Panc1 (cell line): ENCODE measurements at regions of chr15 and their contacts with region 1.

Region 1: DNA sequence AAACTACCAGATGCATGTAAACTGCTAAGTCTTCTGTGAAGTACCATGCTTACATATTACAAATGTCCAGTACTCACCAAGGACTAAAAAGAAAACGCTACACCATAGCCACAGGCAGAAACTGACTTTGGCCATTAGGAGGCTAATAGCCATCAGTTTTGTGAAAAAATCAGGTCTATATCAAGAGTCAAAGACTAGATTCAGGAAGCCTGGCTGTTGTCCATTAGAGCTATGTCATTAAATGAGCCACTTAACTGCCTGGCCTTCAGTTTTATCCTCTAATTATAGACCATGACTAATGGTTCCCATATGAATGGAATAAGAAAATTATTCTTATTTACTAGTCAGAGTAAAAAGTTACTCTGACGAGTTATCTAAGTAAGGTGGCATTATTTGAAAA is 144.1 kb downstream of the VPS13C start:
- DNase-seq: no peak
- ATAC-seq: no peak
- H3K4me3 ChIP-seq: no peak overlapping the region
- H3K27ac ChIP-seq: no peak overlapping the region
- H3K4me1 ChIP-seq: no peaks in the 10 kb centered on the region
- H3K27me3 ChIP-seq: no peaks in the 10 kb centered on the region
- CTCF ChIP-seq: no peak

Region 2: DNA sequence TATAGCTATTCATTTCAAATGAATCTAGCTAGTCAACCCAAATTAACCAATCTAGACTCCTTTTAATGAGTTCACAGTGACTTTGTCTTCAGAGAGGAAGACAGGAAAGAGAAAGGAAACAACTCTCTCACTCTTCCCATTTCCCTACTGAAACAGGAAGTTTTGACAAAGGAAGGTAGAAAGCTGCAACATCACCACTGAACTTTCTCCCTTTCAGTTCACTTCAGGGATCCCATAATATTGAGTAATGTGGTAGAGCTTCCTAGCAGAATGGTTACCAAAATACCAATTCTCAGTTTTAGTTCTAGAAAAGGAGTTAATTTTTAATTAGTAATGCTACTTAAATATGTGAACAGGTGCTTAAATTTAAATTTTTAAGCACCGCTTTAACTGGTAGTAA is 136.6 kb after region 1 on chr15:
- CTCF ChIA-PET with region 1: no interaction called
- POLR2A ChIA-PET with region 1: interaction called, 10 read pairs
- in situ Hi-C with region 1: no loop called
- intact Hi-C with region 1: no loop called
- DNase-seq: no peak
- ATAC-seq: no peak
- H3K4me3 ChIP-seq: no peak overlapping the region
- H3K27ac ChIP-seq: no peak overlapping the region
- H3K4me1 ChIP-seq: peaks cover 5% of the 10 kb centered on the region
- H3K27me3 ChIP-seq: no peaks in the 10 kb centered on the region
- CTCF ChIP-seq: no peak